Upper lobe of right lung (tissue), 1 donor: ENCODE measurements at regions of chr1 and their contacts with region 1.

Region 1: DNA sequence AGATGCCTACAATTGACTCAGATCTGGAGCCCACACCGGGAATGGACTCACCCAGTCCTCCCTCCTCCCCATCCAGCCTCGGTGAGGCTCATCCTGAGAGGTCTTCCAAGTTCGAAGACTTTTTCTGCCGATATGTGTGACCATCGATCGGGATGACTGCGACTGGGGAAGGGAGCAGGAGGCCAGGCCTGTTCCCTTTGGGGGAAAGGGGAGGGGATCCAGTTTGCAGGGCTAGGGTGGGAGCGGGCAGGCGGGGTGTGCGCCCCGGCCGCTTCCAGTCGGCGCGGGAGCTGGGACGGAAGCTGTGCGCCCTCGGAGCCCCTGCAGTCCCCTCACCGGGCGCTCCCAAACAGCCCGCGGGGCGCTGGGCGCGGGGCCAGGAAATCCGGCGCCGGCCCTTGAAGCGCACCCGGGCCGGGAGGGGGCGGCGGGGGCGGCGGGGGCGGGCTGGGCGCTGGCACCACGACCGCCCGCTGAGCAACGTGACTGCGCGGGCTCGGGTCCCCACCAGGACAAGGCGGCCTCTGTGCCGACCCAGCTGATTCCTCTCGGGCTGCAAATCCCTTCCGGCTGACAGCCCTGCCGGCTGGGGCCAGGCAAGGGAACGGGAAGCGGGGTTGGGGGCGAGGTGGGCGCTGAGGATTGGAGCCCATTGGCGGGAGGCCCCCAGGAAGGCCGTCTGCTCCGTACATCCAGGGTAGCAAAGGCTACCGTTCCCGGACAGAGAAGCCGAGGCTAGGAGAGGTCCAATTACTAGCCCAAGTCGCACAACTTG is 103.9 kb downstream of the EBNA1BP2 start:
- DNase-seq: no peak
- ATAC-seq: peak; percentile 13
- H3K4me3 ChIP-seq: peak overlapping the region; percentile 43
- H3K27ac ChIP-seq: no peak overlapping the region
- H3K4me1 ChIP-seq: peaks cover 10% of the 10 kb centered on the region
- H3K27me3 ChIP-seq: peaks cover 12% of the 10 kb centered on the region
- CTCF ChIP-seq: no peak

Region 2: DNA sequence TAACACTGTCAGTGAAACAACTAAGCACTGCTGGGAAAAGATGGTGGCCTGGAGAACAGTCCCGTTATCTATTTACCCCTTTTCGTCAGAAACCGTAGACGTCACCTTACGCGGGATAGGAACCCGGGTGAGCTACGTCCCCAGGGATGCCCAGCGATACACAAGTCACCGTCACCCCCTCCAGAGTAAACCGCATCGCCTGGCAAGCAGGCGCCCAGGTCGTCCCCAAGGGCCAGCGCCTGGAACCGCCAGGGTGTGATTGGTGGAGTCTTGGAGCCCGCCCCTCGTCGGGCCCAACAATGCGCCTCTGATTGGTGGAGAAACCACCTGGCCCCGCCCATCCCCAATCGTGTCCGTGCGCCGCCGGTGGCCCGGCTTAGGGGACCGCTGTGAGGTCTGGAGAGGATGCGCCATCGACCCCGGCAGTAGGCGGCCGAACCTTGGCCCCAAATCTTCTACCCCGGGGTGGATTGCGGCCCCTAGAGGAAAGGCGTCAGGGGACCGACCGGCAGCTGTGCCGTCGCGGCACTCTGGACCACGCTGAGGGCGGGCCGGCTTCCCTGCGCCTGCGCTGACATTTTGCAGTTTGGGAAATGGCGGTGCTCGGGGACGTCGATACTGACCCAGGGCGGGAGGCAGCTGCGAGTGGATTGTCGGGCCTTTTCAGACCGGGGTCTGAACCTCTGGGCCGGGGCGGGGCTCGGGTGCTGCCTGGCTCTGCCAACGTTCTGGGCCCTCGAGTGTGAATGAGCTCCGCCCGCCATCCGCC is 143.9 kb before region 1 on chr1:
- intact Hi-C with region 1: loop called (anchors 5 kb)
- DNase-seq: peak; percentile 95
- ATAC-seq: peak; percentile 97
- H3K4me3 ChIP-seq: peak overlapping the region; percentile 76
- H3K27ac ChIP-seq: peak overlapping the region; percentile 94
- H3K4me1 ChIP-seq: peaks cover 13% of the 10 kb centered on the region
- H3K27me3 ChIP-seq: no peaks in the 10 kb centered on the region
- CTCF ChIP-seq: peak; percentile 12